ENCODE measurements at regions of chr13 and their contacts with region 1.

Region 1: DNA sequence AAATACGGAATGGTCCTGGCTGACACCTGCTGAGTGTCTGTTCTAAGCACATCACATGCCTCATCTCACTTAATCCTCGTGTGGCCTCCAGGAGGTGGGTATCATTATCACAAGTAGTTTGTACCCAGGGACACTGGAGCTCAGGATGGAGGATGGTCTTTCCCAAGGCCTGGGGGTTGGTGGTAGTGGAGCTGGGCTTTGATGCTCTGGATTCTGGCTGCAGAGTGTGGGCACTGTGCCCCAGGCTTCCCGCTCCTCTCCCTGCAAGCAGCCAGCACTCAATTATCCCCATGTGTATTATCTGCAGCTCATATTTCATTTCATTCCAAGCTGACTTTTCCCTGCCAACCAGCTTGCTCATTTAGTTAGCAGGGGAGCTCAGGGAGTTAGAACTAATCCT is 52.1 kb downstream of the SIAH3 start:
- DNase-seq: peak; percentile 63
- ATAC-seq: peak; percentile 90

Region 2: DNA sequence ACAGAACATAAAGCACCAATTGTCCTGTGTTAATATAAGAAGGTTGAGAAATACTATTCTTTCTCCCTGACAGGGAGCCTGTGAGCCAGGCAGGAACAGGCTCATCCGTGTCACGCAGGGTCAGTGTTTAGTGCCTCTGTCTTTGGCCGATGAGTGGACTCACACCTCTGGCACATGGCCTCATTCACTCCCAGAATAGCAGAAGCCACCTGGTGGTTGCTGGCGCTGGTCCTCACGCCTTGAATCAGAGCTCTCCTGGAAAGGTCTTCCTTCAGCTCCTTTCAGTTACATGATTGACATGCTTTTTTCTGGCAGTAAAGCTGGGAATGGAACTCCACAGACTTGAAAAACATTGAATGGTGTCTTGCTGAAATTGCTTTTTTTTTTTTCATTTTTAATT is 80.2 kb after region 1 on chr13:
- intact Hi-C with region 1: loop called (anchors 5 kb)
- DNase-seq: peak; percentile 81
- ATAC-seq: peak; percentile 99

Region 3: GRCh38 chr13:45932676-45933075 is 133.2 kb after region 1 on chr13:
- intact Hi-C with region 1: no loop called
- DNase-seq: no peak
- ATAC-seq: no peak

Measured in left ventricle myocardium superior (tissue), 1 donor.